Right cardiac atrium (tissue), 5 donors: ENCODE measurements at regions of chr2 and their contacts with region 1.

Region 1: DNA sequence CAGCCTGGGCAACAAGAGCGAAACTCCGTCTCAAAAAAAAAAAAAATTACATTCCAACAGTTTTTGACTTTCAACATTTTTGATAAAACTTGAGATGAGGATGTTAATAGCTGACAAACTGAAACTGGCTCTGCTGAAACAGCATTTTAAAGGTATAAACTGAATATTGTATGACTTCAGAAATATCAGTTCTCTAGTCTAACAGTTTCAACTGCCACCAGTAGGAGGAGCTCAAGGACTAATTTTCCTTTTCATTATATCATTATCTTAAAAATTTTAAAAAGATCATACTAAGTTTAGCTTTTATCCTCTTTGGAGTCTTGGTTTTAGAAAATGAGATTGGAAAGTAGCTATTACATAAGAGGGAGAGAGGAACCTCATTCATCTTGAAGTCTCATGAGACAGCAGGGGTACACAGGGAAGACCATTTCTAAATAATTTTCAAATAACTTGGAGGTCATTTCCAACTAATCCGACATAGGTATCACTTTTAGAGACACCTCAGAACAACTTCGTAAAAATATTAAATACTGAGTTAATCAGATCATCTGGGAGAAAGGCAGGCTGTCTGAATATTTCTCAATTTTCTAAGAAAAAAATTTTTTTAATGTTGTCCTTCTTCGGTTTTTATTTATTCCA is 37.6 kb upstream of the MCM6 start:
- DNase-seq: no peak
- ATAC-seq: no peak
- H3K4me3 ChIP-seq: no peak overlapping the region
- H3K27ac ChIP-seq: no peak overlapping the region
- H3K4me1 ChIP-seq: no peaks in the 10 kb centered on the region
- H3K27me3 ChIP-seq: no peaks in the 10 kb centered on the region

Region 2: DNA sequence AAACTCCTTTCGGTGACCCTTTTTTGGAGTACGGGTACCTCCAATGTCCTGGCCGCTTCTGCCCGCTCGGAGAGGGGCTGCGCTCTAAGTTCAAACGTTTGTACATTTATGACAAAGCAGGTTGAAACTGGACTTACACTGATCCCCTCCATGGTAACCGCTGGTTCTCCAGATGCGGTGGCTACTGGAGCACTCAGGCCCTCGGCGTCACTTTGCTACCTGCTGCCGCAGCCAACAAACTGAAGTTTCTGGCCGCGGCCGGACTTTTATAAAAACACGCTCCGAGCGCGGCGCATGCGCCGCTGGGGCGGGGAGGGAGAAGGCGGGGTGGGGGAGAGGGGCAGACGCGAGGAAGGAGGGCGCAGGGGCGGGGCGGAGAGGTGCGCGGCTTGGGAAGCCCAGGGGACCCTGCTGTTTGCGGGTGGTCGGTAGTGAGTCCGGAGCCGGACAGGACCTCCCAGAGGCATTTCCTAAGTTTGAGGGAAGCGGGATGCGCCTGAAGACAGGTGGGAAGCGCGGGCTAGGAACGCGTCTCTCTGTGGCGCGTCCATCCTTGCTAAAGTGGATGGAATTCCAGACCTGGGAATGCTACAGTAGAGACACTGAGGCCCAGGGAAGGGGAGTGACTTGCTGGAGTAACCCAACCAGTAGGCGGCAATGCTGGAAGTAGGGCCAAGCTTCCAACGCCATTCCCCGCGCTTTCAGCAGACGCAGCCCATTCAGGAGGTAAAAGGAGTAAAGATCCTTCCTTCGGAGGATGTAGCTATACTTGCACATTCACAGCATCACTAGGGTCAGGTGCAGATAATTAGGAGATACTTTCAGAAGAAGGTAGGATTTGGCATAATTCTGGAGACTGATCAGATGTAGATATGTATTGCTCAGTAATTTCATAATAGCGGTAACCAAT is 204.3 kb after region 1 on chr2 and contains the start of gene CXCR4:
- intact Hi-C with region 1: loop called in 1 of 4 experiments (anchors 10 kb)
- DNase-seq: peak; percentile 63 to 90 (median 87)
- ATAC-seq: peak; percentile 67 to 71
- H3K4me3 ChIP-seq: peak within 1 kb of the TSS; percentile 65
- H3K27ac ChIP-seq: no peak within 1 kb of the TSS
- H3K4me1 ChIP-seq: no peaks in the 10 kb centered on the region
- H3K27me3 ChIP-seq: peaks cover 2% of the 10 kb centered on the region
- total RNA-seq, gene CXCR4: 2.2 to 3.6 (median 3.4) TPM

Region 3: GRCh38 chr2:136378712-136379595 is 465.1 kb after region 1 on chr2:
- intact Hi-C with region 1: loop called (anchors 2 to 10 kb)
- DNase-seq: peak; percentile 27 to 69 (median 61)
- ATAC-seq: peak; percentile 46 to 68
- H3K4me3 ChIP-seq: no peak overlapping the region
- H3K27ac ChIP-seq: no peak overlapping the region
- H3K4me1 ChIP-seq: no peaks in the 10 kb centered on the region
- H3K27me3 ChIP-seq: no peaks in the 10 kb centered on the region

Region 4: GRCh38 chr2:136384531-136385303 is 470.9 kb after region 1 on chr2:
- intact Hi-C with region 1: loop called (anchors 2 to 10 kb)
- DNase-seq: no peak
- ATAC-seq: peak; percentile 84 to 86
- H3K4me3 ChIP-seq: no peak overlapping the region
- H3K27ac ChIP-seq: no peak overlapping the region
- H3K4me1 ChIP-seq: no peaks in the 10 kb centered on the region
- H3K27me3 ChIP-seq: no peaks in the 10 kb centered on the region